ENCODE measurements at regions of chr13 and their contacts with region 1.

Region 1: DNA sequence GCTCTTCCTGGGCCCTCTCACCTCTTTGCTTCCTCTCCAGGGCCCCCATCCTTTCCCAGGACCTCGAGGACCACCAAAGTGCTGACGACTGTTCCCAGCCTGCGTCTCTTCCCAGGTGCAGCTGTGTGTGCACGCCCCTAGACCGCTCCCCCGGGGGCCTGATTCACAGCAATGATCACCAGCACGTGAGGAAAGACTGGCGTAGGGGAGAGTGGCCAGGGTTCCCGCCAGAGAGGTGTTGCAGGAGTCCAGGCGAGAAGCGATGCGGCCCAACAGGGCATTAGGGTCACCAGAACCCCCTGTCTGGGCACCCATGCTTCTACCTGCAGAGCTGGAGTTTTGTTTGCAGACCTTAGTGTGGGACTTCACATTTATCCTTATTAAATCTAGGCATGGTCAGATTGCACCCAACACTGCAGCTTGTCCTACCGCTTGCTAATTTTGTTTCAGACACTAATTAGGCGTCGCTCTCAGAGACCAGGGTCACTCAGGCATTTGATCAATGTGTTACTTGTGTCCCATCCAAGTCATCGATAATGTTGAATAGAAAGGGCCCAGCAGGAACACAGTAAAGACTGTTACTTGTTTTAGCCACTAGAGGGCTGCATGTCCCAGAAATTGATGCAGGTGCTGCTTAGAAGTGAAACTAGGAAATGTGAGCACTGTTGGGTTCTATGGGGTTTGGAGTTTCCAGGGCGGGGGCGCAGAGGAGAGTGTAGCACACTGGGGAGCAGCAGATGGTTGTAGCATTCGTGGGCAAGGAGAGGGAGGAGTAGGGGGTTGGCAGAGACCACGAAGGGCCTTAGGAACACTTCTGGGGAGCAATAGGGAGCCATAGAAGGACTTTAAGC is 53.2 kb downstream of the CDADC1 start:
- DNase-seq: peak; percentile 25 to 86 (median 54)
- ATAC-seq: peak; percentile 98
- H3K4me3 ChIP-seq: peak overlapping the region; percentile 51
- H3K4me3 Mint-ChIP-seq: peak overlapping the region; percentile 71
- H3K27ac ChIP-seq: no peak overlapping the region
- H3K27ac Mint-ChIP-seq: no peak overlapping the region
- H3K4me1 ChIP-seq: peaks cover 11% of the 10 kb centered on the region
- H3K4me1 Mint-ChIP-seq: peaks cover 14% of the 10 kb centered on the region
- H3K27me3 ChIP-seq: no peaks in the 10 kb centered on the region
- H3K27me3 Mint-ChIP-seq: no peaks in the 10 kb centered on the region
- CTCF ChIP-seq: peak; percentile 80

Region 2: GRCh38 chr13:49436890-49437289 is 135.9 kb after region 1 on chr13:
- CTCF ChIA-PET with region 1: interaction called, 4 read pairs
- POLR2A ChIA-PET with region 1: no interaction called
- intact Hi-C with region 1: loop called in 1 of 2 experiments (anchors 5 kb)
- DNase-seq: peak in 3 of 14 experiments; percentile 11 to 22 (median 18)
- ATAC-seq: no peak
- H3K4me3 ChIP-seq: no peak overlapping the region
- H3K4me3 Mint-ChIP-seq: no peak overlapping the region
- H3K27ac ChIP-seq: no peak overlapping the region
- H3K27ac Mint-ChIP-seq: no peak overlapping the region
- H3K4me1 ChIP-seq: no peaks in the 10 kb centered on the region
- H3K4me1 Mint-ChIP-seq: no peaks in the 10 kb centered on the region
- H3K27me3 ChIP-seq: no peaks in the 10 kb centered on the region
- H3K27me3 Mint-ChIP-seq: no peaks in the 10 kb centered on the region
- CTCF ChIP-seq: no peak

Region 3: DNA sequence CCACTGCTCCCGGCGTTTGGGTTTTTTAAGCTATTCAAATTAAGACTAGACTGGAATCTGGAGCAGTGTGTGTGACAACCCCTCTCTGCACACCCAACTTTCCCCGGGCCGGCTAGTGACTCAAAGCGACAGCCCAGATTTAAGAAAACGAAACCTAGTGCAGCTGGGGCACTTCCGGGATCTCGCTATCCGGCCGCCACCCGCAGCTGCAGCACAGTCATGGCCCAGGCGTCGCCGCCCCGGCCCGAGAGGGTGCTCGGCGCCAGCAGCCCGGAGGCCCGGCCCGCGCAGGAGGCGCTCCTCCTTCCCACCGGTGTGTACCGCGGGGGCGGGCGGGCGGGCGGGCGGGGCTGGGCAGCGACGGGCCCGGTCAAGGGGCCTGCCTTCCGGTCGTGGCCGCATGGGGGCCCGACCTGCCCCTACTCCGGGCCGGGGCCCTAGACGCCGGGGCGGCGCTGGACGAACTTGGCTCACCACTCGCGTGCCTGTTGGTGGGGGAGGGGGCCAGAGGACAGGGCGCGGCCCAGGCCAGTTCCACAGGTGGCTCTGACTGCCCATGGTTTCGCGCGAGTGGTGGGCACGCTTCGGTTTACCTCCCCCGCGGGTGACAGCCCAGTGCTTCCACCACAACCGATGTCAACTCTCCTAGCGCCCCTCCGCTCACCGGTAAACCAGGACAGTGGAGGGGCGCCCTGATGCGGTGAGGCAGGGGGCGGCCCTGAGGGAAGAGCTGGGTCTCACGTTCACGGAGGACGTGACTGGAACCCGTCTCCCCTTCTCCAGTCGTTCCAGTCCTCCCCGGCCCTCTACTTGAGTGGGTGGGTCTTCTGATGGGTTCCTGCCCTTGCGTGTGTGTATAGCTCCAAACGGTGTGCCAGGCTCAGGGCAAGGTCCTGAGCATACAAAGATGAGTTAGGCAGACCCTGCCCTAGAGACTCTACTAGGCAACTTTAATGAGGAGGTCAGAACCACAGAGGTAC is 195.1 kb after region 1 on chr13 and contains the start of gene PHF11:
- CTCF ChIA-PET with region 1: interaction called, 3 read pairs
- POLR2A ChIA-PET with region 1: no interaction called
- intact Hi-C with region 1: loop called in 1 of 2 experiments (anchors 5 kb)
- DNase-seq: peak; percentile 76 to 95 (median 84)
- ATAC-seq: peak; percentile 77
- H3K4me3 ChIP-seq: peak within 1 kb of the TSS; percentile 82
- H3K4me3 Mint-ChIP-seq: peak within 1 kb of the TSS; percentile 99
- H3K27ac ChIP-seq: peak within 1 kb of the TSS; percentile 88 to 94
- H3K27ac Mint-ChIP-seq: peak within 1 kb of the TSS; percentile 95
- H3K4me1 ChIP-seq: peaks cover 49% of the 10 kb centered on the region
- H3K4me1 Mint-ChIP-seq: peaks cover 63% of the 10 kb centered on the region
- H3K27me3 ChIP-seq: no peaks in the 10 kb centered on the region
- H3K27me3 Mint-ChIP-seq: no peaks in the 10 kb centered on the region
- CTCF ChIP-seq: no peak
- total RNA-seq, gene PHF11: 105 TPM

Region 4: DNA sequence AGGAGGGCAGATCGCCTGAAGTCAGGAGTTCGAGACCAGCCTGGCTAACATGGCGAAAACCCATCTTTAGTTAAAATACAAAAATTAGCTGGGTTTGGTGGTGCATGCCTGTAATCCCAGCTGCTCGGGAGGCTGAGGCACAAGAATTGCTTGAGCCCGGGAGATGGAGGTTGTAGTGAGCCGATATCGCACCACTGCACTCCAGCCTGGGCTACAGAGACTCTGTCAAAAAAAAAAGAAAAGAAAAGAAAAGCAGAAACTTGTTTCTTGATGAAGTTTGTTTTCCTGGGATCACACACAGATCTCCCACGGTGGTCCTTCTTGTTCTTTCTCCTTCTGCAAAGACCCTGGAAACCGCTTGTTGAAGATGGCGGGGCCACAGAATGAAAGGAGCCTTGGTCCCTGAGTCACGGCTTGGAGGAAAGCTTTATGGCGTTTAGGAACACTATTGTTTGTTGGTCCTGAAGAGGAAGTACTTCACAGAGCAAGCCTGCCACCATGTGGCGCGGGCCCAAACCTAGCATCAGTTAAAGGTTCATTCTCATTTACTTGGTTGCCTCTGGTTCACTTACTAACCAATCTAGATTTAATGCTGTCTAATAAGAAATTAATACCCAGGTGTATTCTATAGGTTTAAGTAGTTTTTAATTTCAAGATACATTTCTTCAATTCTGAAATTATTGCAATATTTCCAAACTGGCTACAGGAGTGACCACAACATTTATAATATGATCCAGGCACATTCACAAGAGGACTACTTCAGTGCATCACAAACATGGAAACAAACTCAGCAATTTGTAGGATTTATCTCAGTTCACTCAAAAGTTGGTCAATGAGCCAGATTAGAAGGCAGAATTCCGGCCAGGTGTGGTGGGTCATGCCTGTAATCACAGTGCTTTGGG is 306.0 kb after region 1 on chr13:
- CTCF ChIA-PET with region 1: interaction called, 7 read pairs
- POLR2A ChIA-PET with region 1: no interaction called
- intact Hi-C with region 1: loop called (anchors 1 kb)
- DNase-seq: peak; percentile 66 to 88 (median 76)
- ATAC-seq: peak; percentile 99
- H3K4me3 ChIP-seq: peak overlapping the region; percentile 24
- H3K4me3 Mint-ChIP-seq: peak overlapping the region; percentile 86
- H3K27ac ChIP-seq: no peak overlapping the region
- H3K27ac Mint-ChIP-seq: no peak overlapping the region
- H3K4me1 ChIP-seq: peaks cover 9% of the 10 kb centered on the region
- H3K4me1 Mint-ChIP-seq: peaks cover 5% of the 10 kb centered on the region
- H3K27me3 ChIP-seq: no peaks in the 10 kb centered on the region
- H3K27me3 Mint-ChIP-seq: no peaks in the 10 kb centered on the region
- CTCF ChIP-seq: peak; percentile 82

Region 5: DNA sequence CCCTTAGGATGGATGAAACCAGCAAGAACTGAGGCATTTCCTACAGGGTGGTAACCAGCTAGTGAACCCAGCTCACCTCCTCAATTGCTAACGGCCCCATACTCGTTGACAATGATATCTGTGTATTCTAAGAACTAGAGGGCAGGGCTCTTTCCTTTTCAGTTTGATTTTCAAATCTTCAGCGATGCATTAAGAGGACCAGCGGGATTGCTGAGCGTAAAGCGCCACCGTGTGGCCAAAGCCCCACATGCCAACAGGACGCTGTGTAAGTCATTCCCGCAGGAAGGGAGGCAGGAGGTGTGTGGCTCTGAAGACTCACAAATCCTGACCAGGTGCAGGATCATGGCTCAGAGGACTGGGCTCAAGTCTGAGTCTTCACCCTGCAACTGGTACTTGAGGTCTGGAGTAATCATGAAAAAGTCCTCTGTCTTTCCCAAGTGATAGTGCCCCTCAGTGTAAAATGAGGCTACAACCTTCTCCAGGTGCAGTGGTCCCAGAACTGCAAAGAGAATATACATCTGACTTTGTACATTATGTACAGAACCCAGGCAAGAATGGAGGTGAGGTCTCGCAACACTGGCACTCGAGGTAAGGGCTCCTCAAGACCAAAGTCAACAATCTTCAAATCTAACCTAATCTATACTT is 1769.2 kb after region 1 on chr13:
- CTCF ChIA-PET with region 1: no interaction called
- POLR2A ChIA-PET with region 1: no interaction called
- intact Hi-C with region 1: loop called in 1 of 2 experiments (anchors 10 kb)
- DNase-seq: peak; percentile 57 to 84 (median 72)
- ATAC-seq: peak; percentile 85
- H3K4me3 ChIP-seq: no peak overlapping the region
- H3K4me3 Mint-ChIP-seq: no peak overlapping the region
- H3K27ac ChIP-seq: no peak overlapping the region
- H3K27ac Mint-ChIP-seq: no peak overlapping the region
- H3K4me1 ChIP-seq: peaks cover 9% of the 10 kb centered on the region
- H3K4me1 Mint-ChIP-seq: peaks cover 7% of the 10 kb centered on the region
- H3K27me3 ChIP-seq: peaks cover 6 to 18% of the 10 kb centered on the region in 2 experiments
- H3K27me3 Mint-ChIP-seq: peaks cover 26% of the 10 kb centered on the region
- CTCF ChIP-seq: peak; percentile 93